ENCODE measurements at regions of chr13 and their contacts with region 1.

Region 1: DNA sequence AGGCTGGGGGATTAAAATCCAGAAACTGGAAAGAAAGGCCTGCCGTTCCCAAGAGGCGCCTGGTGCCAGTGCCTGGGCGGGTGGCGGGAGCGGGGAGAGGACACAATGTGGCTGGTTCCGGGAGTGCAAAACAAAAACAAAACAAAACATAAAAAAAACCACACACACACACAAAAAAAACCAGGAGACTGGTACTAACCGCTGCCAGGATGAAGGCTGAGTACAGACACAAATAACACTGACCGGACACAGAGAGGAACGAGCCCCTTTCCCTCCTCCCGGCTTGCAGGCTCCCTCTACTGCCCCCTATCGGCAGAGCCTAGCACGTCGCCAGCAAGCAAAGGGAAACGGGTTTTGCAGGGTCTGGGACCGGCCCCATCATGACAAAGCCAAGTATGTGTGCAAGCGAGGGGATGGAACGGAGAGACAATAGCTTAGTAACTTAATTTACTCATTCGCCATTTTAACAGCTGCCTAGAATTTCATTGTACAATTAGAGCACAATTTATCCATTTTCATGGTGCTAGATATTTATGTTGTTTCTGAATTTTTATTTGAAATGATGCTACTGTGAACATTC is 17.9 kb upstream of the ZDHHC20 start:
- DNase-seq: peak; percentile 70 to 96 (median 90)

Region 2: DNA sequence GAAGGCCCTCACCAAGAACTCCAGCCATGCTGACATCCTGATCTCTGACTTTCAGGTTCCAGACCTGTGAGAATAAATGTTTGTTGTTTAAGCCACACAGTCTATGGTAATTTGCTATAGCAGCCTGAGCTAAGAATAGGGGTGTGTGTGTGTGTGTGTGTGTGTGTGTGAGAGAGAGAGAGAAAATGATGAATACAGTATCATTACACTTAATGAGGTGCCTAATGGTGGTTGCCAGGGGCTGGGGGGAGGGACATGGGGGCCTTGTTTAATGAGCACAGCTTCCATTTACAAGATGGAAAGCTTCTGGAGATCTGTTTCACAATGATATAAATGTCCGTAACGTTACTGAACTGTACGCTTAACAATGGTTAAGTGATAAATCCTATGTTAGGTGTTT is 361.8 kb before region 1 on chr13:
- intact Hi-C with region 1: loop called (anchors 10 kb)
- DNase-seq: no peak

Region 3: GRCh38 chr13:21297914-21298831 is 178.8 kb before region 1 on chr13:
- intact Hi-C with region 1: loop called (anchors 5 kb)
- DNase-seq: peak; percentile 62 to 95 (median 90)

Measured in head of caudate nucleus (tissue), 42 donors.